ENCODE measurements at regions of chr11 and their contacts with region 1.

Region 1: DNA sequence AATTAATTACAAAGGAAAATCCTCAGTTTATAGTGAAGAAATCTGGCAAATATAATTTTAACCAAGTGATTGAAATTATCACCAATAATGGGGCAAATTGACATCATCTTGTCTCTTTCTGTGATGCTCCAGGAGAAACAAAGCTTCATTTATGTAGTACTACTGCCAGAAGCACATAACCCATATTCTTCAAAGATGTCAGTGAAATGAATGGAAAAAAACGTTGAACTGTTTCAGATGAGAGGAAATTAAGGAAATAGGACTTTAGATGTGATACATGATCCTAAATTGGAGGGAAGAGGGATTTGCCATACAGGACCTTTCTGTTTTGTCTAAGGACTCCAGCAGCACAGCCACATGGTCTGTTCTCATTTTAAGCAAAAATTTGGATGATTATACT is 57.6 kb downstream of the PPP6R3 start:
- DNase-seq: no peak
- ATAC-seq: no peak
- H3K4me3 ChIP-seq: no peak overlapping the region
- H3K4me3 Mint-ChIP-seq: no peak overlapping the region
- H3K27ac ChIP-seq: no peak overlapping the region
- H3K27ac Mint-ChIP-seq: peak overlapping the region in 3 of 9 donors; percentile 32 to 79 (median 53)
- H3K4me1 ChIP-seq: peaks cover 0 to 2% of the 10 kb centered on the region in 2 donors
- H3K4me1 Mint-ChIP-seq: peaks cover 34 to 86% (median 82%) of the 10 kb centered on the region in 7 donors
- H3K27me3 ChIP-seq: no peaks in the 10 kb centered on the region
- H3K27me3 Mint-ChIP-seq: no peaks in the 10 kb centered on the region

Region 2: DNA sequence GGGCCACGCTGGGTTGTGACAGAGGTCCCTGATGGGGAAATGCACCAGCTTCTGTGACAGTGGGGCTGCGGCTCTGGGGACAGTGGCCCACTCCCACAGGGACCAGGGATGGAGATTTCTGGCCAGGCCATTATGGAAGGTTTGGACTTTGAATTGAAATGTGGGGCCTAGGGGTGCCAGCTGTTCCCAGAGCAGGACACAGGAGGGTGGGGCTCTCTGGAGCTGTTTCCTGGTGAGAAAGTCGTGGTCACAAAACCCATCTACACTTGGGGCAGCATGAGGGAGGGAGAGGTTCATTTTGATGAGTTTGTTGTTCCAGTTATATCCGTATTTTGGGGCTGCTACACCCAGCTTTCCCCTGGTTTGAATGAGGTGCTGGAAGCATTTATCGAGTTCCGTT is 153.6 kb before region 1 on chr11:
- CTCF ChIA-PET with region 1: no interaction called
- POLR2A ChIA-PET with region 1: no interaction called
- intact Hi-C with region 1: no loop called
- DNase-seq: no peak
- ATAC-seq: no peak
- H3K4me3 ChIP-seq: no peak overlapping the region
- H3K4me3 Mint-ChIP-seq: no peak overlapping the region
- H3K27ac ChIP-seq: no peak overlapping the region
- H3K27ac Mint-ChIP-seq: peak overlapping the region in 1 of 9 donors; percentile 68
- H3K4me1 ChIP-seq: no peaks in the 10 kb centered on the region
- H3K4me1 Mint-ChIP-seq: peaks cover 0 to 16% (median 0%) of the 10 kb centered on the region in 7 donors
- H3K27me3 ChIP-seq: no peaks in the 10 kb centered on the region
- H3K27me3 Mint-ChIP-seq: no peaks in the 10 kb centered on the region

Region 3: GRCh38 chr11:68480852-68481510 is 37.2 kb before region 1 on chr11:
- CTCF ChIA-PET with region 1: no interaction called
- POLR2A ChIA-PET with region 1: no interaction called
- intact Hi-C with region 1: no loop called
- DNase-seq: no peak
- ATAC-seq: no peak
- H3K4me3 ChIP-seq: no peak overlapping the region
- H3K4me3 Mint-ChIP-seq: peak overlapping the region in 9 of 10 donors; percentile 2 to 75 (median 54)
- H3K27ac ChIP-seq: no peak overlapping the region
- H3K27ac Mint-ChIP-seq: peak overlapping the region in 6 of 9 donors; percentile 1 to 71 (median 36)
- H3K4me1 ChIP-seq: peaks cover 28 to 40% of the 10 kb centered on the region in 2 donors
- H3K4me1 Mint-ChIP-seq: peaks cover 44 to 92% (median 79%) of the 10 kb centered on the region in 7 donors
- H3K27me3 ChIP-seq: no peaks in the 10 kb centered on the region
- H3K27me3 Mint-ChIP-seq: no peaks in the 10 kb centered on the region

Region 4: GRCh38 chr11:68506908-68507307 is 11.3 kb before region 1 on chr11:
- CTCF ChIA-PET with region 1: no interaction called
- POLR2A ChIA-PET with region 1: no interaction called
- intact Hi-C with region 1: loop called in 1 of 2 experiments (anchors 2 kb)
- DNase-seq: no peak
- ATAC-seq: no peak
- H3K4me3 ChIP-seq: no peak overlapping the region
- H3K4me3 Mint-ChIP-seq: peak overlapping the region in 9 of 10 donors; percentile 1 to 59 (median 38)
- H3K27ac ChIP-seq: no peak overlapping the region
- H3K27ac Mint-ChIP-seq: peak overlapping the region in 6 of 9 donors; percentile 10 to 82 (median 56)
- H3K4me1 ChIP-seq: peaks cover 0 to 32% of the 10 kb centered on the region in 2 donors
- H3K4me1 Mint-ChIP-seq: peaks cover 52 to 94% (median 84%) of the 10 kb centered on the region in 7 donors
- H3K27me3 ChIP-seq: no peaks in the 10 kb centered on the region
- H3K27me3 Mint-ChIP-seq: no peaks in the 10 kb centered on the region

Measured in naive thymus-derived CD4-positive, alpha-beta T cell (primary cell).